Activated T-helper 2 cell treated with anti-CD3 and anti-CD28 coated beads, Interferon-gamma antibody, Interleukin-2, Interleukin-4, amounts not matched to agents 10 μg/mL and 5 μg/mL and 100 μg/mL, durations not matched to agents 14 hours and 24 hours and 36 hours (primary cell): ENCODE measurements at regions of chr2 and their contacts with region 1.

Region 1: GRCh38 chr2:62705007-62705829 is at the start of gene EHBP1:
- DNase-seq: peak; percentile 97
- H3K4me3 Mint-ChIP-seq: peak within 1 kb of the TSS; percentile 85
- H3K27ac Mint-ChIP-seq: peak within 1 kb of the TSS; percentile 70
- H3K4me1 Mint-ChIP-seq: peaks cover 31% of the 10 kb centered on the region
- H3K27me3 Mint-ChIP-seq: peaks cover 12% of the 10 kb centered on the region
- total RNA-seq, gene EHBP1: 22.1 and 25.6 TPM in 2 replicates

Region 2: GRCh38 chr2:61144697-61145268 is 1560.4 kb before region 1 on chr2:
- intact Hi-C with region 1: loop called (anchors 10 kb)
- DNase-seq: peak; percentile 92
- H3K4me3 Mint-ChIP-seq: peak overlapping the region; percentile 86
- H3K27ac Mint-ChIP-seq: peak overlapping the region; percentile 88
- H3K4me1 Mint-ChIP-seq: peaks cover 2% of the 10 kb centered on the region
- H3K27me3 Mint-ChIP-seq: no peaks in the 10 kb centered on the region

Region 3: GRCh38 chr2:62195421-62196277 is 509.6 kb before region 1 on chr2 and contains the start of gene B3GNT2:
- intact Hi-C with region 1: loop called (anchors 5 kb)
- DNase-seq: peak; percentile 74
- H3K4me3 Mint-ChIP-seq: peak within 1 kb of the TSS; percentile 90
- H3K27ac Mint-ChIP-seq: peak within 1 kb of the TSS; percentile 91
- H3K4me1 Mint-ChIP-seq: peaks cover 32% of the 10 kb centered on the region
- H3K27me3 Mint-ChIP-seq: peaks cover 11% of the 10 kb centered on the region
- total RNA-seq, gene B3GNT2: 29.0 and 29.3 TPM in 2 replicates

Region 4: DNA sequence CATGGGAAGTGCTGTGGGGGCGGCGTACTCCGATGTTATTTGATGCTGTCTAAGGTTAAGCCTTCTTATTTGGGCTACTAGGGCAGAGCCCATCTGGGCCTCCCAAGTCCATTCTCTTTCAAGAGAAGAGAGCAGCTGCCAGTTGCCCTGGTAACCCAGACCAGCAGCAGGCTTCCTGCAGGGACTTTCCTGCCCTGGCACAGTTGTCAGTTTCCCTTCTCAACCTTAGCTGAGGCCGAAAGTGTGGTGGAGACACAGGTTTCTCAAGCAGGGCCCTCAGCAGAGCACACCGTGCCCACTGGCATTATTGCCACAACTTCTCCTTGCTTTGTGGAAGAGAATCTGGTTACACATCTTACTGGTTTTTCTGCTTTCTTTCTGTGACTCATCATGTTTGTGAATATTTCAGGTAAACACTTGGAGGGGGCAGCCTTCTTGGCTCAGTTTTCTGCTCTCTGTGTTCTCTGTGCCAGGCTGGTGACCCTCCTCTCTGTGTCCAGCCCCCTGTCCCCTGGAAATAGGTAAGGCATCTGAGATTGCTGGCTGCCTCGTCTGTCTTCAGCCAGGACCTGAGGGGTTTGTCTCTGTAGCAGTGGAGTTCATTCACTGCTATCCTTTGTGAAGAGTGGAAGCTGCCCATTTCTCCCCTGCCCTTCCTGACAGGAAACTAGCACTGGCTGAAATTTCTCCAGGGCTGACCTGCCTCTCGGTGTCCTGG is 398.3 kb before region 1 on chr2:
- intact Hi-C with region 1: loop called (anchors 5 kb)
- DNase-seq: peak; percentile 25
- H3K4me3 Mint-ChIP-seq: no peak overlapping the region
- H3K27ac Mint-ChIP-seq: peak overlapping the region; percentile 88
- H3K4me1 Mint-ChIP-seq: peaks cover 78% of the 10 kb centered on the region
- H3K27me3 Mint-ChIP-seq: peaks cover 2% of the 10 kb centered on the region

Region 5: DNA sequence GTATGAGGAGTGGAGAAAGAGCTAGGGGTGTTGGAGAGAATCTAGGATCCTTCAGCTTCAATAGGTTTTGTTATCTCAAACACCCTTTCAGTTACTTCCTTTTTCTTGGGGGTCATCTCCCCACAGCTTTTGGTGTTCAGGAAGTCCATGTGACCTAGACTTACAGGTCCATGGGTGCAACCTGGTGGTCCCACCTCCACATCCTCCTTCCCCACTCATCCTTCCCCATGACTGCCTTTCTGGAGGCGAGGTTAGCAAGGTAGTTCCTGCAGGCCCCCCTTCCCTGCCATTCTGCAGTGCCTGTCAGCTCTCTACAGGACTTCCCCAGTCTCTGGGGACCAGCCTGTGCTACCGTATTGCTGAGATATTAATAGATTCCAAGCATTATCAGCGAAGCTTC is 306.9 kb before region 1 on chr2:
- intact Hi-C with region 1: no loop called
- DNase-seq: no peak
- H3K4me3 Mint-ChIP-seq: no peak overlapping the region
- H3K27ac Mint-ChIP-seq: no peak overlapping the region
- H3K4me1 Mint-ChIP-seq: no peaks in the 10 kb centered on the region
- H3K27me3 Mint-ChIP-seq: peaks cover 12% of the 10 kb centered on the region

Region 6: DNA sequence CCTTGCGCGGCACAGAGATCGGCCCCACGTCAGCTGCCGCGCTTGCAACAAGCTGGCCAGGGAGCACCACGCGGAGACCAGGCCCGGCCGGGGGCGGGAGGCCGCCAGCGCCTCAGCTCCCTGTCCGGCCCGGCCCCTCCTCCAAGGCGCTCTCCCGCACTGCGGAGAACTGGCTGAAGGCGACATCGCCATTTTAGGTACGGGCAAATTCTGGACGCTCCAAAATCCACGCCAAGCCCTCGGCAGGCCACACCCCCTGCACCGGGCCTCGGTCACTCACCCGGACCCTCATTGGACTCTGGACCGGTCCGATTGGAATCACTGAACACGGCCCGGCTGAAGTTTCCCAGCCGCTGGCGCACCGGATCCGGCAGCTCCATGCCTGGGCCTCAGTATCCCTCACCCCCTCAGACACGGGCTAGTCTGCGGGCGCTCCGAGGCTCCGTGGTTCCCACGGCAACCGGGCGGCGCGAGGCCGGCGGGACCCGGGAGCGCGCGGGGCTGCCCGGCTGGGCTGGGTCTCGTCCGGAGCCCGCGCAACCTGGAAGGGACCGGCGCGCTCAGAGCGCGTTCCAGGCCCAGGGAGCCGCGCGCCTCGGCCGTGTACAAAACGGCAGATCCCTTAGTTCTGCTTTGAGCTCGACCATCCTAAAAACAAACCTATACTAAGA is 199.3 kb before region 1 on chr2 and contains the start of gene TMEM17:
- intact Hi-C with region 1: loop called (anchors 5 kb)
- DNase-seq: peak; percentile 19
- H3K4me3 Mint-ChIP-seq: peak within 1 kb of the TSS; percentile 71
- H3K27ac Mint-ChIP-seq: no peak within 1 kb of the TSS
- H3K4me1 Mint-ChIP-seq: peaks cover 8% of the 10 kb centered on the region
- H3K27me3 Mint-ChIP-seq: peaks cover 25% of the 10 kb centered on the region
- total RNA-seq, gene TMEM17: 0.23 TPM in 1 of 2 replicates, not detected in the other

Region 7: GRCh38 chr2:63841254-63842022 is 1136.2 kb after region 1 on chr2 and contains the start of gene UGP2:
- intact Hi-C with region 1: loop called (anchors 5 kb)
- DNase-seq: peak; percentile 88
- H3K4me3 Mint-ChIP-seq: peak within 1 kb of the TSS; percentile 92
- H3K27ac Mint-ChIP-seq: peak within 1 kb of the TSS; percentile 95
- H3K4me1 Mint-ChIP-seq: peaks cover 48% of the 10 kb centered on the region
- H3K27me3 Mint-ChIP-seq: peaks cover 2% of the 10 kb centered on the region
- total RNA-seq, gene UGP2: 90.8 and 91.2 TPM in 2 replicates